Posterior cingulate gyrus (tissue), 11 donors: ENCODE measurements at regions of chr12 and their contacts with region 1.

Region 1: GRCh38 chr12:53551889-53552291 is 44.6 kb upstream of the NPFF start:
- DNase-seq: no peak

Region 2: DNA sequence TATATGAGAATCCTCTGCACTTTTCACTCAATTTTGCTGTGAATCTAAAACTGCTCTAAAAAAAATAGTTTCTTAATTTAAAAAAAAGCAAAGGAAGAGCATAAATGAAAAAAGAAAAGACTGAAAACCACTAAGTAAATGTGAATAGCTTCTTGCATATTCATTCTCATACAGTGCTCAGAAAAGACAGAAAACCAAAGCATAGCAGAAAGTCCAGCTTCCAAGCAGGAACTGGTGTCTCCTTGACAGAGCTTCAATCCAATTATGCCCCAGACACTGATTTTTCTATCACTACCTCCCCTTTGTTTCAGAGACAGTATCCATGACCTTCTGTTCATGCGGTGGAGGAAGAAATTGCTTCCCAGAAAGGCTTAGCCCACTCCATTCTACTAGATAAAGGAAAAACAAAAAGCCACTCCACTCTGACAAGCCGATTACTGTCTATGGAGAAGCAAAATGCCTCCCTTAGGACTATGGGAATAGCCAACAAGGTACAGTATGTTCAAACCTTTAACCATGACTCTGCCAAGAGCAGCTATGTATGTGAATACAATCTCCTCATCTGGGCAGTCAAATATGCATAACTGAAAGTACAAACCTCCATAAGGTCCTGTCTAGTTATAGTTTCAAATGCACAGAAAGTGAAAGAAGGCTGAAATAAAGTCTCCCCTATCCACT is 33.7 kb after region 1 on chr12:
- intact Hi-C with region 1: loop called (anchors 5 kb)
- DNase-seq: no peak